ENCODE measurements at regions of chr22 and their contacts with region 1.

Region 1: DNA sequence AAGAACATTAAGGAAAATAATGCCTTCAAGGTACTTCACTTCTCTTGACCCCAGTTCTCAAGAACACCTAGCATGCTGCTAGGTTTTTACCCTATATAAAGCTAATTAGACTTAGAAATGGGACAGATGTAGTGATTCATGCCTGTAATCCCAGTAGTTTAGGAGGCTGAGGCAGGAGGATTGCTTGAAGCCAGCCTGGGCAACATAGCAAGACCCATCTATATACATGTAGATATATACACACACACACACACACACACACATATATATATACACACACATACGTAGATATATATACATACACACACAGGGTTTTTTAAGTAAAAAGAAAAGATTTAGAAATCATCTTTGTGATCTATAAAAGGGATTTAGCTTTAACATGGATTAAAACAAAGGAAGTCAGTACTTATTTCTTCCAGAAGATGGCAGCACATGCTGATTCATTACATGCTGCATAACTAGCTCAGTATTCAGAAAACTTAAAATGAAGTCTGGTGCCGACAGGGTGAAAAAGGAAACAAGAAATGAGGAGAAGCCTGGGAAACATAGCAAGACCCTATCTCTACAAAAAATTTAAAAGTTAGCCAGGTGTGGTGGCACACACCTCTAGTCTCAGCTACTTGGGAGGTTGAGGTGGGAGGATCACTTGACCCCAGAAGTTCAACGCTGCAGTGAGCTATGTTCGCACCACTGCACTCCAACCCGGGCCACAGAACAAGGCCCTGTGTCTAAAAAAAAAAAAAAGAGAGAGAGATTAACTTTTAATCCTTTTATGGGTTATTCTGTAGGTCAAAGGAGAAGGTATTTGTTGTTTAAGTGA is 28.5 kb upstream of the RBX1 start:
- DNase-seq: peak in 2 of 5 donors; percentile 54 to 61
- H3K4me3 ChIP-seq: no peak overlapping the region
- H3K4me3 Mint-ChIP-seq: peak overlapping the region in 6 of 7 donors; percentile 0 to 62 (median 20)
- H3K27ac ChIP-seq: no peak overlapping the region
- H3K27ac Mint-ChIP-seq: peak overlapping the region in 6 of 8 donors; percentile 1 to 88 (median 74)
- H3K4me1 ChIP-seq: peaks cover 4% of the 10 kb centered on the region
- H3K4me1 Mint-ChIP-seq: peaks cover 4 to 5% (median 4%) of the 10 kb centered on the region in 3 donors
- H3K27me3 ChIP-seq: no peaks in the 10 kb centered on the region
- H3K27me3 Mint-ChIP-seq: no peaks in the 10 kb centered on the region

Region 2: DNA sequence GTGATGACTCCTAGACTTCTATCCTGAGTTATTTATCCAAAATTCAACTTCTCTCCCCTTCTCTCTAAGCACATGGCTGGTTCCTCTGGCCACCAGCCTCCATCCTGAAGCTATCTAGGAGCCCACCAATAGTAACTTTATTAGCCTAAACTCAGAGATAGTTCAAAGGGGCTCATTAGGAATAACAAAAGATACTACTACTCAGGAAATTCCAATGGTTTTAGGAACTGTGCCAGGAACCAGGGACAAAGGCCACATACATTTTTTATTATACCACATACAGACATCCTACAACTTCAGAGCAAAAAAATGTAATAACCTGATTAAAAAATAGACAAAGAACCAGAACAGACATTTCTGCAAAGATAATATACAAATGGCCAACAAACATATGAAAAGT is 131.5 kb before region 1 on chr22:
- CTCF ChIA-PET with region 1: no interaction called
- POLR2A ChIA-PET with region 1: no interaction called
- DNase-seq: no peak
- H3K4me3 ChIP-seq: no peak overlapping the region
- H3K4me3 Mint-ChIP-seq: no peak overlapping the region
- H3K27ac ChIP-seq: no peak overlapping the region
- H3K27ac Mint-ChIP-seq: peak overlapping the region in 1 of 8 donors; percentile 5
- H3K4me1 ChIP-seq: no peaks in the 10 kb centered on the region
- H3K4me1 Mint-ChIP-seq: no peaks in the 10 kb centered on the region
- H3K27me3 ChIP-seq: no peaks in the 10 kb centered on the region
- H3K27me3 Mint-ChIP-seq: no peaks in the 10 kb centered on the region

Region 3: GRCh38 chr22:40950962-40951794 is 28.5 kb after region 1 on chr22 and contains the start of gene RBX1:
- CTCF ChIA-PET with region 1: interaction called, 10 read pairs
- POLR2A ChIA-PET with region 1: interaction called, 17 read pairs
- DNase-seq: peak; percentile 98 to 100 (median 99)
- H3K4me3 ChIP-seq: peak within 1 kb of the TSS; percentile 81
- H3K4me3 Mint-ChIP-seq: peak within 1 kb of the TSS; percentile 92 to 100 (median 98)
- H3K27ac ChIP-seq: peak within 1 kb of the TSS; percentile 98
- H3K27ac Mint-ChIP-seq: peak within 1 kb of the TSS; percentile 93 to 100 (median 99)
- H3K4me1 ChIP-seq: peaks cover 20% of the 10 kb centered on the region
- H3K4me1 Mint-ChIP-seq: peaks cover 31 to 48% (median 46%) of the 10 kb centered on the region in 3 donors
- H3K27me3 ChIP-seq: no peaks in the 10 kb centered on the region
- H3K27me3 Mint-ChIP-seq: peaks cover 0 to 6% of the 10 kb centered on the region in 2 donors
- total RNA-seq, gene RBX1: 88.3 to 88.8 TPM

Region 4: GRCh38 chr22:40960145-40960544 is 37.5 kb after region 1 on chr22:
- CTCF ChIA-PET with region 1: interaction called, 15 read pairs
- POLR2A ChIA-PET with region 1: no interaction called
- DNase-seq: no peak
- H3K4me3 ChIP-seq: no peak overlapping the region
- H3K4me3 Mint-ChIP-seq: no peak overlapping the region
- H3K27ac ChIP-seq: no peak overlapping the region
- H3K27ac Mint-ChIP-seq: peak overlapping the region in 5 of 8 donors; percentile 4 to 85 (median 28)
- H3K4me1 ChIP-seq: no peaks in the 10 kb centered on the region
- H3K4me1 Mint-ChIP-seq: peaks cover 12 to 32% (median 32%) of the 10 kb centered on the region in 3 donors
- H3K27me3 ChIP-seq: no peaks in the 10 kb centered on the region
- H3K27me3 Mint-ChIP-seq: no peaks in the 10 kb centered on the region

Region 5: GRCh38 chr22:41091132-41092022 is 168.7 kb after region 1 on chr22:
- CTCF ChIA-PET with region 1: interaction called, 12 read pairs
- POLR2A ChIA-PET with region 1: interaction called, 14 read pairs
- DNase-seq: peak; percentile 98 to 100 (median 99)
- H3K4me3 ChIP-seq: peak overlapping the region; percentile 90
- H3K4me3 Mint-ChIP-seq: peak overlapping the region; percentile 91 to 99 (median 96)
- H3K27ac ChIP-seq: peak overlapping the region; percentile 93
- H3K27ac Mint-ChIP-seq: peak overlapping the region; percentile 94 to 99 (median 98)
- H3K4me1 ChIP-seq: peaks cover 18% of the 10 kb centered on the region
- H3K4me1 Mint-ChIP-seq: peaks cover 33 to 39% (median 35%) of the 10 kb centered on the region in 3 donors
- H3K27me3 ChIP-seq: no peaks in the 10 kb centered on the region
- H3K27me3 Mint-ChIP-seq: no peaks in the 10 kb centered on the region

Region 6: DNA sequence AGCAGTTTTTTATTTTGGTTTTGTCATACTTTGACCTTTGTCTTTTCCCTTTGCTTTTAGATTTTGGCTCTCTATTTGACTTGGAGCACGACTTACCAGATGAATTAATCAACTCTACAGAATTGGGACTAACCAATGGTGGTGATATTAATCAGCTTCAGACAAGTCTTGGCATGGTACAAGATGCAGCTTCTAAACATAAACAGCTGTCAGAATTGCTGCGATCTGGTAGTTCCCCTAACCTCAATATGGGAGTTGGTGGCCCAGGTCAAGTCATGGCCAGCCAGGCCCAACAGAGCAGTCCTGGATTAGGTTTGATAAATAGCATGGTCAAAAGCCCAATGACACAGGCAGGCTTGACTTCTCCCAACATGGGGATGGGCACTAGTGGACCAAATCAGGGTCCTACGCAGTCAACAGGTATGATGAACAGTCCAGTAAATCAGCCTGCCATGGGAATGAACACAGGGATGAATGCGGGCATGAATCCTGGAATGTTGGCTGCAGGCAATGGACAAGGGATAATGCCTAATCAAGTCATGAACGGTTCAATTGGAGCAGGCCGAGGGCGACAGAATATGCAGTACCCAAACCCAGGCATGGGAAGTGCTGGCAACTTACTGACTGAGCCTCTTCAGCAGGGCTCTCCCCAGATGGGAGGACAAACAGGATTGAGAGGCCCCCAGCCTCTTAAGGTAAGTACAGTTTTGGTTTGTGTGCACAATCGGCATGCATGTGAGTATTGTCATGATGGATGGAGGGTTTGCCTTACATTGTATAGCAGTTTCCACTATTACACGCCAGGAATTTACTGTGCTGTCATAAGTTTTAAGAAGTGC is 194.7 kb after region 1 on chr22:
- CTCF ChIA-PET with region 1: interaction called, 10 read pairs
- POLR2A ChIA-PET with region 1: no interaction called
- DNase-seq: no peak
- H3K4me3 ChIP-seq: no peak overlapping the region
- H3K4me3 Mint-ChIP-seq: no peak overlapping the region
- H3K27ac ChIP-seq: no peak overlapping the region
- H3K27ac Mint-ChIP-seq: peak overlapping the region in 3 of 8 donors; percentile 1 to 69 (median 18)
- H3K4me1 ChIP-seq: peaks cover 23% of the 10 kb centered on the region
- H3K4me1 Mint-ChIP-seq: peaks cover 51 to 91% (median 87%) of the 10 kb centered on the region in 3 donors
- H3K27me3 ChIP-seq: no peaks in the 10 kb centered on the region
- H3K27me3 Mint-ChIP-seq: no peaks in the 10 kb centered on the region

Region 7: GRCh38 chr22:41146573-41146972 is 223.9 kb after region 1 on chr22:
- CTCF ChIA-PET with region 1: interaction called, 12 read pairs
- POLR2A ChIA-PET with region 1: no interaction called
- DNase-seq: no peak
- H3K4me3 ChIP-seq: no peak overlapping the region
- H3K4me3 Mint-ChIP-seq: no peak overlapping the region
- H3K27ac ChIP-seq: no peak overlapping the region
- H3K27ac Mint-ChIP-seq: peak overlapping the region in 1 of 8 donors; percentile 43
- H3K4me1 ChIP-seq: no peaks in the 10 kb centered on the region
- H3K4me1 Mint-ChIP-seq: peaks cover 0 to 4% (median 3%) of the 10 kb centered on the region in 3 donors
- H3K27me3 ChIP-seq: no peaks in the 10 kb centered on the region
- H3K27me3 Mint-ChIP-seq: no peaks in the 10 kb centered on the region

Region 8: DNA sequence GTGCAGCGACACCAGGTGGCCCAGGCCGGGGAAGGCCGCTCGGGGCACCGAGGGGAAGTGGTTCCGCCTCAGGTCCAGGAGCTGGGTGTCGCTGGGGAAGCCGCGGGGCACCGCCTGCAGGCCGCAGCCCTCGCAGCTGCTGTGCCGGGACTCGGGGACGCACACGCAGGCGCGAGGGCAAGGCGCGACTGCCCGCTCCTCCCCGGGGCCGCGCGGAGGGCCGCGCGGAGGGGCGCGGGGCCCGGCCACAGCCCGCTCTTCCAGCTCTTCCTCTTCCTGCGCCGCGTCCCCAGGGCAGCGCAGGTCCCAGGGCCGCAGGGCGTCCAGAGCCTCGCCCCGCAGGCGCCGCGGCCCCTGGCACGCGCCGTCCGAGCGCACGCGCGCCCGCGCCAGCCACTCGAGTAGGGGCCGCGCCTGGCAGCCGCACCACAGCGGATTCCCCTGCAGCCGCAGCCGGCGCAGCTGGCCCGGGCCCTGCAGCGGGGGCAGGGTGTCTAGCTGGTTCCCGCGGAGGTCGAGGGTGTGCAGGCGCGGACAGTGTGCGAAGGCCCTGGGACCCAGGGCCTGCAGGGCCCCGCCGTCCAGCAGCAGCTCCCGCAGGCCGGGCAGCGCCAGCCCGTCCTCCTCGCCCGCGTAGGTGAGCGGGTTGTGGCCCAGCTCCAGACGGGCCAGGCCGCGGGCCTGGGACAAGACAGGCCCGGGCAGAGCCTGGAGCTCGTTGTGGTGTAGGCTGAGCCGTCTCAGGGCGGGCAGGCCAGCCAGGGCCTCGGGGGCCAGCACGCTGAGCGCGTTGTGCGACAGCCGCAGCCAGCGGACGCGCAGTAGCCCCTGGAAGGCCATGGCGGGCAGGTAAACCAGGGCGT is 315.2 kb after region 1 on chr22:
- CTCF ChIA-PET with region 1: interaction called, 66 read pairs
- POLR2A ChIA-PET with region 1: interaction called, 9 read pairs
- DNase-seq: peak; percentile 69 to 84 (median 77)
- H3K4me3 ChIP-seq: peak overlapping the region; percentile 50
- H3K4me3 Mint-ChIP-seq: peak overlapping the region in 5 of 7 donors; percentile 24 to 76 (median 70)
- H3K27ac ChIP-seq: no peak overlapping the region
- H3K27ac Mint-ChIP-seq: no peak overlapping the region
- H3K4me1 ChIP-seq: peaks cover 9% of the 10 kb centered on the region
- H3K4me1 Mint-ChIP-seq: peaks cover 3 to 15% (median 4%) of the 10 kb centered on the region in 3 donors
- H3K27me3 ChIP-seq: no peaks in the 10 kb centered on the region
- H3K27me3 Mint-ChIP-seq: no peaks in the 10 kb centered on the region